ENCODE measurements at regions of chr6 and their contacts with region 1.

Region 1: GRCh38 chr6:41984623-41985022 is 43.0 kb upstream of the CCND3 start:
- DNase-seq: no peak
- ATAC-seq: no peak
- H3K4me3 ChIP-seq: no peak overlapping the region
- H3K4me3 Mint-ChIP-seq: no peak overlapping the region
- H3K27ac ChIP-seq: no peak overlapping the region
- H3K27ac Mint-ChIP-seq: peak overlapping the region; percentile 29 to 64
- H3K4me1 ChIP-seq: peaks cover 14 to 34% of the 10 kb centered on the region in 2 experiments
- H3K4me1 Mint-ChIP-seq: peaks cover 72 to 81% (median 80%) of the 10 kb centered on the region in 3 donors
- H3K27me3 ChIP-seq: no peaks in the 10 kb centered on the region
- H3K27me3 Mint-ChIP-seq: no peaks in the 10 kb centered on the region

Region 2: DNA sequence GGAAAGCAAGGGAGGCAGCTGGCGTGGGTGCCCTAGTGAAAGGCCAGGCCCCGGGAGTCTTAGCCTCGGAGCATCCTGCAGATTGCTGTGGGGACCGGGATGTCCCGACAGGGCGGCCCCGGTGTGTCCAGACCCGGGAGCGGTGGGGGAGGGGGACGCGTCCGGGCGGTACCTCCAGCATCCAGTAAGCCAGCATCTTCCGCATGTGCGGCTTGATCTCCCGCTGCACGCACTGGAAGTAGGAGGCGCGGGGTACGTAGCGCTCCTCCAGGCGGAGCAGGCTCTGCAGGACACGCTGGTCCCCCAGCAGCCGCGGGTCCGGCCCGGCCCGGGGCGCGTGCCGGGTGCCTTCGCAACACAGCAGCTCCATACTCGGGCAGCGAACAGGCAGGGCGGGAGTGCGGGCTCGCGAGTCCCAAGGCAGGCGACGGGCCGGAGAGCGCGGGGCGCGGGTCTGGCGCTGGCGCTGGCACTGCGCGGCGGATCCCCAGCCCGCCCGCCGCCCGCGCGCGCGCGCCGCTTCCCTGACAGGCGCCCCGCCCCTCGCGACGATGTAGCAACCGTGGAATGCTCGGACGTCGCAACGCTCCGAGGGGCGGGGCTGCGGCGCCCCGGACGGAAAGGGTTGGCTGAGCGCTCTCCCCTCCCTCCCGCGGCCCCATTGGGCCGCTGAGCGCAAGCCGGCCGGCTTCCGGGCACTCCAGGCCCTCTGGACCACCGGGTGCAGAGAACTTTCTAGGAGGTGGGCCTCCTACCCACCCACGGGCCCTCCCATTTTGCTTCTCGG is 43.1 kb before region 1 on chr6 and contains the start of gene CCND3:
- CTCF ChIA-PET with region 1: no interaction called
- POLR2A ChIA-PET with region 1: interaction called in 1 of 2 experiments, 12 read pairs
- DNase-seq: peak; percentile 61 to 90 (median 77)
- ATAC-seq: peak; percentile 71 to 75 (median 74)
- H3K4me3 ChIP-seq: peak within 1 kb of the TSS; percentile 73 to 91
- H3K4me3 Mint-ChIP-seq: peak within 1 kb of the TSS; percentile 81 to 93 (median 87)
- H3K27ac ChIP-seq: peak within 1 kb of the TSS; percentile 66
- H3K27ac Mint-ChIP-seq: peak within 1 kb of the TSS; percentile 89 to 92
- H3K4me1 ChIP-seq: peaks cover 56 to 66% of the 10 kb centered on the region in 2 experiments
- H3K4me1 Mint-ChIP-seq: peaks cover 63 to 75% (median 74%) of the 10 kb centered on the region in 3 donors
- H3K27me3 ChIP-seq: no peaks in the 10 kb centered on the region
- H3K27me3 Mint-ChIP-seq: no peaks in the 10 kb centered on the region
- total RNA-seq, gene CCND3: 265 to 532 (median 284) TPM

Region 3: DNA sequence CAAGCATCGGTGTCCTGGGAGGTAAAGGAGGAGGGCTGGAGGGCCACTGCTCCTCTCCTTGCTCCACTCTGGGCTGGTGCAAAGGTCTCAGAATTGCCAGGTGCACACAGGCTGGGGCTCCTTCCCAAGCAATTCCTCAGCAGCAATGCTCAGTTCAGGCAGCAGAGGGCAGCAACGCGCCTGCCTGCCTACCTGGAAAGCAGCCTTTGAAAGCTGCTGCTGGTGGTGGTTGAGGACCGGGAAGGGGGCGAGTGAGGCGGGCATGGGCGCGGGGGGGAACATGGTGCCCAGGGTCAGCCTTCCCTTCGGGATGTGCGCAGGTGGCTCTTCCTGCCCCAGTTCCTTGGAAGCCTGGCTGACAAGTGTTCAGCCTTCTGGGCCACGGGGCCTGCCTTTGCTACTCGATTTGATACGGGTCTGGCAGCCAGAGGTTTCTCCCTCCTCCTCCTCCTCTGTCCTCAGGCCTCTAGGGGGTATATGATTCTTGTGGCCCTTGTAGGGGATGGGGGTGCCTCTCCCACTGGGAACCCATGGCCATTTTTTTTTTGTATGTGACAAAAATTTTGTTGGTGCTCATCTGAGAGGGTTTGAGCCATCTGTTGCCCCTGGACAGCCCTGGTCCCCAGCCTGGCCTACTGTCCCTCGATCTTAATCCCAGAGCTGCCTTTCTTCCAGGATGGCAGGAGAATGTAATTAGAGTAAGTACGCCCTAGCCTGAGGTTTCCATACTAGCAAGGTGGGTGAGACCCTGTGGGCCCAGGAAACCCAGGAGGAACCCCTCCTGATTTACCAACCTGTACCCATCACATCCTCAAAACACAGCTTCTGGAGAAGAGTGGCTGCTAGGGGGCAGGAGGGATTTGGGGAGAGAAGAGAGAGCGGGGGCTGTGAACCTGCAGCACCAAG is 1682.9 kb after region 1 on chr6:
- CTCF ChIA-PET with region 1: no interaction called
- POLR2A ChIA-PET with region 1: no interaction called
- DNase-seq: peak; percentile 46 to 87 (median 70)
- ATAC-seq: peak; percentile 75 to 76 (median 75)
- H3K4me3 ChIP-seq: peak overlapping the region in 1 of 2 donors; percentile 7
- H3K4me3 Mint-ChIP-seq: peak overlapping the region in 1 of 3 donors; percentile 63
- H3K27ac ChIP-seq: no peak overlapping the region
- H3K27ac Mint-ChIP-seq: peak overlapping the region in 1 of 2 donors; percentile 64
- H3K4me1 ChIP-seq: peaks cover 0 to 22% of the 10 kb centered on the region in 2 experiments
- H3K4me1 Mint-ChIP-seq: peaks cover 16 to 26% (median 21%) of the 10 kb centered on the region in 3 donors
- H3K27me3 ChIP-seq: peaks cover 0 to 18% of the 10 kb centered on the region in 2 experiments
- H3K27me3 Mint-ChIP-seq: no peaks in the 10 kb centered on the region

Measured in T-cell (primary cell).